ENCODE measurements at regions of chr6 and their contacts with region 1.

Region 1: GRCh38 chr6:153800580-153801188 is 238.4 kb upstream of the OPRM1 start:
- DNase-seq: no peak
- ATAC-seq: no peak
- H3K4me3 Mint-ChIP-seq: no peak overlapping the region
- H3K27ac Mint-ChIP-seq: no peak overlapping the region
- H3K4me1 Mint-ChIP-seq: peaks cover 3% of the 10 kb centered on the region; the same call in 1 of the 2 replicates
- H3K27me3 Mint-ChIP-seq: no peaks in the 10 kb centered on the region
- CTCF ChIP-seq: no peak

Region 2: GRCh38 chr6:153814136-153814535 is 13.5 kb after region 1 on chr6:
- CTCF ChIA-PET with region 1: interaction called, 10 read pairs
- POLR2A ChIA-PET with region 1: no interaction called
- DNase-seq: peak; percentile 71
- ATAC-seq: peak; percentile 99
- H3K4me3 Mint-ChIP-seq: no peak overlapping the region
- H3K27ac Mint-ChIP-seq: no peak overlapping the region
- H3K4me1 Mint-ChIP-seq: no peaks in the 10 kb centered on the region
- H3K27me3 Mint-ChIP-seq: no peaks in the 10 kb centered on the region
- CTCF ChIP-seq: peak; percentile 59

Measured in WTC11 (cell line).